Right cardiac atrium (tissue), 5 donors: ENCODE measurements at regions of chr4 and their contacts with region 1.

Region 1: GRCh38 chr4:11081006-11081405 is 347.7 kb downstream of the HS3ST1 start:
- DNase-seq: no peak
- ATAC-seq: no peak
- H3K4me3 ChIP-seq: no peak overlapping the region
- H3K27ac ChIP-seq: no peak overlapping the region
- H3K4me1 ChIP-seq: no peaks in the 10 kb centered on the region
- H3K27me3 ChIP-seq: no peaks in the 10 kb centered on the region

Region 2: GRCh38 chr4:10582059-10582686 is 498.8 kb before region 1 on chr4:
- intact Hi-C with region 1: loop called in 1 of 4 experiments (anchors 10 kb)
- DNase-seq: peak in 2 of 3 donors; percentile 29 to 61
- ATAC-seq: peak; percentile 64 to 72
- H3K4me3 ChIP-seq: no peak overlapping the region
- H3K27ac ChIP-seq: no peak overlapping the region
- H3K4me1 ChIP-seq: no peaks in the 10 kb centered on the region
- H3K27me3 ChIP-seq: no peaks in the 10 kb centered on the region